Endothelial cell of umbilical vein (primary cell): ENCODE measurements at regions of chr14 and their contacts with region 1.

Region 1: GRCh38 chr14:61252369-61253063 is 28.6 kb downstream of the TMEM30B start:
- DNase-seq: peak; percentile 90
- H3K4me3 ChIP-seq: no peak overlapping the region
- H3K27ac ChIP-seq: no peak overlapping the region
- H3K4me1 ChIP-seq: peaks cover 27% of the 10 kb centered on the region
- H3K27me3 ChIP-seq: peaks cover 0 to 2% of the 10 kb centered on the region in 2 experiments
- CTCF ChIP-seq: peak; percentile 77 to 91
- POLR2A ChIP-seq: no peak

Region 2: DNA sequence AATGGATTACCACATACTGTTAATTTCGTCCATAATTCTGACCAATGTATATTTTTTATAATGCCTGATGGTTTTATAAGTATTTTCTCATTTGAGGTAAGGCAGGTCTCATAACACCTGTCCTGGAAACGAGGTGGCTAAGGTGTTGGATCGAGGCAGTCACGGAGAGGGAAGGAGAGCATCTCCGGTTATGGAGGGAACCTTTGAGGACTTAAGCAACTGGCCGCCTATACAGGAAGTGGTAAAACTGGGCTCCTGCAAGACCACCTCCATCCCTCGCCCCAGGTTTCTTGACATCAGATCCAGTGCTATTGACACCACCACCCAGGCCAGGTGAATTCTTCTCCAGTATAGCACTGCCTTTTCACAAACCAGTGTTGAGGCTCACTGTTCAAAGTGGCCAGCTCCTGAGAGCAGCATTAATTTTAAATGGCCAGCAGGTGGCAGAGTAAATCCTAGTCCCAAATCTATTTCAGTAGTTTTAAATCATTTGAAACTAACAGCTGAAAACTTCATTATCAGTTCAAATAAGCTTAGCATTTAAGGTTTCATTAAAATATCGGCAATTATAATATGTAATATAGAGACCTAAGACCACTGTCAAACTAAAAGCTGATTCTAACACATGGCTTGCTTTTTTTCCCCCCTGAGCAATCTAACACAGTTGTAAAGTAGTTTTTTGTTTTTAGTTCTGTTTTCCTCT is 902.7 kb before region 1 on chr14:
- CTCF ChIA-PET with region 1: interaction called, 57 read pairs
- POLR2A ChIA-PET with region 1: no interaction called
- dilution Hi-C with region 1: no loop called
- intact Hi-C with region 1: loop called (anchors 1 kb)
- DNase-seq: peak; percentile 51
- H3K4me3 ChIP-seq: no peak overlapping the region
- H3K27ac ChIP-seq: no peak overlapping the region
- H3K4me1 ChIP-seq: peaks cover 4% of the 10 kb centered on the region
- H3K27me3 ChIP-seq: peaks cover 8 to 24% of the 10 kb centered on the region in 2 experiments
- CTCF ChIP-seq: peak; percentile 54 to 59
- POLR2A ChIP-seq: no peak

Region 3: DNA sequence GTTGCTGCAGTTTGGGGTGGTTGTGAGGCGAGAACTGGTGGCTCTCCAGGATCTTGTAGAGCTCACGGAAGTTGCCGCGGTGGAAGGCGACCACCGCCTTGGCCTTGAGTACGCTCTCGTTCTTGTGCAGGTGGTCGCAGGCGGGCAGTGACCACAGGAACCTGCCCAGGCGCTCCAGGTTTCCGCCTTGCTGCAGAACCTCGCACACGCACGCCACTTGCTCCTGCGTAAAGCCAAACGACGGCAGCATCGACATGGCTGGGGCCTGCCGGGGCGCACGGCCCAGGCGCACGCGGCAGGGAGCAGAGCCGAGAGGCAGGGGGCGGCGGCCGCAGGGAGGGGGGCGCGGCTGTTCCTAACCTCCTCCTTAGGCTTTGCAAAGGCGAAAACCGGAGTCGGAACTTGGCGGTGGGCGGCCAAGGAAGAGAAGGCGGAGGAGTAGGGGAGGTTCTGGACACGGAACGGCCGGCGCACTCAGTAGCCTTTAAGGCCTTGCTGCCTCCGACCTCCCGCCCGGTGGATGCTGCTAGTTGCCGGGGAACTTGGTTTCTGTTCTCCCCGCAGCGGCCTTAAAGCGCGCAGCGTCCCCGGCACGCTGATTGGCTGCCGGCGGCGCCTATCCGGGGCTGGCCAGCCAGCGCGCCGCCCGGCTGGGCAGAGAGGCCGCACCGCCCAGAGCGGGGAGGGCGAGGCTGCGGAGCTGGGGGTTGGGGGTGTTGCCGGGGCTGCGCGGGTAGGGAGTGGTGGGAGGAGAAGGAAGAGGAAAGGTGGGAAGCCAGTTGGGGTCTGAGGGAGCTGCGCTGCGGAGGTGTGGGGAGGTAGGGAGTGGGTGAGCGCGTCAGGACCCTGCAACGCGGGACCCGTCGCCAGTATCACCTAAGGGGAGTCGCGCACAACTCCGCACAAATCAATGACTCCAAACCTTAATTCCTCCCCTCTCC is 603.3 kb before region 1 on chr14 and contains the start of gene SIX1:
- CTCF ChIA-PET with region 1: interaction called, 9 read pairs
- POLR2A ChIA-PET with region 1: no interaction called
- dilution Hi-C with region 1: loop called (anchors 25 kb)
- intact Hi-C with region 1: no loop called
- DNase-seq: peak; percentile 83
- H3K4me3 ChIP-seq: peak within 1 kb of the TSS; percentile 12 to 47 (median 15)
- H3K27ac ChIP-seq: no peak within 1 kb of the TSS
- H3K4me1 ChIP-seq: peaks cover 25% of the 10 kb centered on the region
- H3K27me3 ChIP-seq: peaks cover 80 to 98% of the 10 kb centered on the region in 2 experiments
- CTCF ChIP-seq: no peak
- POLR2A ChIP-seq: peak; percentile 57
- total RNA-seq, gene SIX1: 0.40 and 0.55 TPM in 2 replicates

Region 4: GRCh38 chr14:60734465-60735242 is 517.9 kb before region 1 on chr14 and contains the start of gene MNAT1:
- CTCF ChIA-PET with region 1: interaction called, 4 read pairs
- POLR2A ChIA-PET with region 1: no interaction called
- dilution Hi-C with region 1: no loop called
- intact Hi-C with region 1: loop called (anchors 5 kb)
- DNase-seq: peak; percentile 90
- H3K4me3 ChIP-seq: peak within 1 kb of the TSS; percentile 38 to 75 (median 59)
- H3K27ac ChIP-seq: peak within 1 kb of the TSS; percentile 32
- H3K4me1 ChIP-seq: peaks cover 16% of the 10 kb centered on the region
- H3K27me3 ChIP-seq: peaks cover 9 to 25% of the 10 kb centered on the region in 2 experiments
- CTCF ChIP-seq: no peak
- POLR2A ChIP-seq: peak; percentile 77
- total RNA-seq, gene MNAT1: 55.7 and 58.0 TPM in 2 replicates

Region 5: DNA sequence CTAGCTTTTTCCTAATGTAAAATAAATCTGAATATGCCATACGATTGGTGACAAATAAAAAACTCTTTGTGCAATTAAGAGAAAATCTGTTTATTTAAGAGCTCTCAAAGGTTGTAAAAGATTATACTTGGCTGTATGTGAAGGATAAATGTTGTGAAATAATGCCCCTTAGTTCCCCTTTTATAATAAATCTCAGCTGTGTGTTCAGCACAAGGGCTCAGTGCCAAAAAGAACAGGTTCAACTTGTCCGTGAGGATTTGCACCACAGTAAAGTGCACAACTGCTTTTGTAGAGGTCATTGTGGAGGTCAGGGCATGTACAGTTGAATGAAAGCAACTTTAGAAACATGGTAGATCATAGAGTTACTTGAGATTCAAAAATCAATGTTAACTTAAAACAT is 390.2 kb before region 1 on chr14:
- CTCF ChIA-PET with region 1: no interaction called
- POLR2A ChIA-PET with region 1: no interaction called
- dilution Hi-C with region 1: no loop called
- intact Hi-C with region 1: no loop called
- DNase-seq: peak; percentile 42
- H3K4me3 ChIP-seq: no peak overlapping the region
- H3K27ac ChIP-seq: no peak overlapping the region
- H3K4me1 ChIP-seq: no peaks in the 10 kb centered on the region
- H3K27me3 ChIP-seq: no peaks in the 10 kb centered on the region
- CTCF ChIP-seq: no peak
- POLR2A ChIP-seq: no peak

Region 6: GRCh38 chr14:60980811-60981632 is 271.5 kb before region 1 on chr14 and contains the starts of genes SLC38A6 and TRMT5:
- CTCF ChIA-PET with region 1: interaction called, 16 read pairs
- POLR2A ChIA-PET with region 1: no interaction called
- dilution Hi-C with region 1: no loop called
- intact Hi-C with region 1: loop called (anchors 2 kb)
- DNase-seq: peak; percentile 98
- H3K4me3 ChIP-seq: peak within 1 kb of the TSS; percentile 27 to 72 (median 61)
- H3K27ac ChIP-seq: peak within 1 kb of the TSS; percentile 83
- H3K4me1 ChIP-seq: peaks cover 46% of the 10 kb centered on the region
- H3K27me3 ChIP-seq: no peaks in the 10 kb centered on the region
- CTCF ChIP-seq: no peak
- POLR2A ChIP-seq: peak; percentile 51
- total RNA-seq, gene SLC38A6: 21.6 and 24.6 TPM in 2 replicates
- total RNA-seq, gene TRMT5: 12.6 and 13.5 TPM in 2 replicates

Region 7: GRCh38 chr14:61188978-61189808 is 63.3 kb before region 1 on chr14:
- CTCF ChIA-PET with region 1: interaction called, 5 read pairs
- POLR2A ChIA-PET with region 1: no interaction called
- dilution Hi-C with region 1: no loop called
- intact Hi-C with region 1: loop called (anchors 2 kb)
- DNase-seq: peak; percentile 70
- H3K4me3 ChIP-seq: peak overlapping the region; percentile 9 to 50 (median 32)
- H3K27ac ChIP-seq: peak overlapping the region; percentile 44
- H3K4me1 ChIP-seq: peaks cover 44% of the 10 kb centered on the region
- H3K27me3 ChIP-seq: no peaks in the 10 kb centered on the region
- CTCF ChIP-seq: peak; percentile 70 to 85
- POLR2A ChIP-seq: no peak

Region 8: GRCh38 chr14:61598980-61599379 is 346.5 kb after region 1 on chr14:
- CTCF ChIA-PET with region 1: no interaction called
- POLR2A ChIA-PET with region 1: no interaction called
- dilution Hi-C with region 1: no loop called
- intact Hi-C with region 1: no loop called
- DNase-seq: peak; percentile 85
- H3K4me3 ChIP-seq: no peak overlapping the region
- H3K27ac ChIP-seq: peak overlapping the region; percentile 47
- H3K4me1 ChIP-seq: peaks cover 17% of the 10 kb centered on the region
- H3K27me3 ChIP-seq: no peaks in the 10 kb centered on the region
- CTCF ChIP-seq: no peak
- POLR2A ChIP-seq: no peak